ENCODE measurements at regions of chr2 and their contacts with region 1.

Region 1: DNA sequence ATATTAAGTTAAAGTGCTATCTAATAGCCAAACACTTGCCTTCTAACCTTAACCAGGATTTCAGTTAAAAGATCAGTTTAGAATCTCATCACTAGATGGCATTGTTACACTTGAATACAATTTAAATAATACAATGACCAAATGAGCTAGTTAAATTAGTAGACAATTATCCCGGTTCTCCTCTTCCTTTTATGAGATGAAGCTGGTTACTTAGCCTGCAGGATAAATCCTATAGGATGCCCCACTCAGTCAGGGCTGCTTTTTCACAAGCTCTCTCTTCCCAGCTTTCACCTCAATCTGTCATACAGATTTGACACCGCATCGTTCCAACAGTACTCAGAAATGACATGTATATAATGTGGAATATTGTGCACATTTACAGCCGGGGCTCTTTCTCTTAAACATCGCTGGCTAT is 678.8 kb downstream of the KCNJ3 start:
- DNase-seq: no peak
- H3K4me3 ChIP-seq: no peak overlapping the region
- H3K4me3 Mint-ChIP-seq: no peak overlapping the region
- H3K27ac Mint-ChIP-seq: no peak overlapping the region
- H3K4me1 ChIP-seq: no peaks in the 10 kb centered on the region
- H3K4me1 Mint-ChIP-seq: no peaks in the 10 kb centered on the region
- H3K27me3 ChIP-seq: no peaks in the 10 kb centered on the region
- H3K27me3 Mint-ChIP-seq: no peaks in the 10 kb centered on the region
- CTCF ChIP-seq: peak; percentile 6 to 27

Region 2: DNA sequence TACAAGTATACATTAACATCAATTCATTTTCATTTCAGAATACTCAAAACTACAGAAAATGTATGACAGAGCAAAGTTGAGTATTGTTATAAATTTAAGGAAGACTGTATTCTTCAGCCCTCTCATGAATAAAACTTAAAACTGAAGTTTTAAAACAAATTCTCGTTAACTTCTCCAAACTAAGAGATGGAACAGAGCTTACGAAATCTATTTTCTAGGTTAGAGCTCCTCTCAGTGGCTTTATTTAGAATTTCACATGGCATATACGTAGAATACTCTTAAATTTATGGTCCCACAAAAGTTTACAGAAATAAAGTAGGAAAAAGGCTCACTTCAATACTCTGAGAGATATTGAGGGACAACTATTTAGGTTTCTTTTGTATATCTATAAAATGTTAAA is 66.7 kb before region 1 on chr2:
- CTCF ChIA-PET with region 1: no interaction called
- POLR2A ChIA-PET with region 1: no interaction called
- intact Hi-C with region 1: no loop called
- DNase-seq: no peak
- H3K4me3 ChIP-seq: no peak overlapping the region
- H3K4me3 Mint-ChIP-seq: no peak overlapping the region
- H3K27ac Mint-ChIP-seq: no peak overlapping the region
- H3K4me1 ChIP-seq: no peaks in the 10 kb centered on the region
- H3K4me1 Mint-ChIP-seq: no peaks in the 10 kb centered on the region
- H3K27me3 ChIP-seq: no peaks in the 10 kb centered on the region
- H3K27me3 Mint-ChIP-seq: no peaks in the 10 kb centered on the region
- CTCF ChIP-seq: peak; percentile 44 to 66

Region 3: GRCh38 chr2:155714983-155715382 is 337.7 kb after region 1 on chr2:
- CTCF ChIA-PET with region 1: no interaction called
- POLR2A ChIA-PET with region 1: no interaction called
- intact Hi-C with region 1: no loop called
- DNase-seq: no peak
- H3K4me3 ChIP-seq: no peak overlapping the region
- H3K4me3 Mint-ChIP-seq: no peak overlapping the region
- H3K27ac Mint-ChIP-seq: no peak overlapping the region
- H3K4me1 ChIP-seq: no peaks in the 10 kb centered on the region
- H3K4me1 Mint-ChIP-seq: no peaks in the 10 kb centered on the region
- H3K27me3 ChIP-seq: no peaks in the 10 kb centered on the region
- H3K27me3 Mint-ChIP-seq: no peaks in the 10 kb centered on the region
- CTCF ChIP-seq: no peak

Region 4: GRCh38 chr2:155815886-155816285 is 438.6 kb after region 1 on chr2:
- CTCF ChIA-PET with region 1: interaction called, 12 read pairs
- POLR2A ChIA-PET with region 1: no interaction called
- intact Hi-C with region 1: loop called (anchors 1 kb)
- DNase-seq: peak; percentile 58 to 64
- H3K4me3 ChIP-seq: no peak overlapping the region
- H3K4me3 Mint-ChIP-seq: no peak overlapping the region
- H3K27ac Mint-ChIP-seq: no peak overlapping the region
- H3K4me1 ChIP-seq: 0 out of 2 replicates have a peak, but pooled peaks cover 3% of the 10 kb centered on the region
- H3K4me1 Mint-ChIP-seq: no peaks in the 10 kb centered on the region
- H3K27me3 ChIP-seq: no peaks in the 10 kb centered on the region
- H3K27me3 Mint-ChIP-seq: no peaks in the 10 kb centered on the region
- CTCF ChIP-seq: peak; percentile 46

Region 5: GRCh38 chr2:156279446-156280150 is 902.3 kb after region 1 on chr2:
- CTCF ChIA-PET with region 1: no interaction called
- POLR2A ChIA-PET with region 1: no interaction called
- intact Hi-C with region 1: no loop called
- DNase-seq: no peak
- H3K4me3 ChIP-seq: no peak overlapping the region
- H3K4me3 Mint-ChIP-seq: no peak overlapping the region
- H3K27ac Mint-ChIP-seq: no peak overlapping the region
- H3K4me1 ChIP-seq: no peaks in the 10 kb centered on the region
- H3K4me1 Mint-ChIP-seq: no peaks in the 10 kb centered on the region
- H3K27me3 ChIP-seq: no peaks in the 10 kb centered on the region
- H3K27me3 Mint-ChIP-seq: peaks cover 3% of the 10 kb centered on the region
- CTCF ChIP-seq: no peak

Region 6: GRCh38 chr2:156672556-156673332 is 1295.5 kb after region 1 on chr2:
- CTCF ChIA-PET with region 1: no interaction called
- POLR2A ChIA-PET with region 1: no interaction called
- intact Hi-C with region 1: loop called (anchors 10 kb)
- DNase-seq: no peak
- H3K4me3 ChIP-seq: no peak overlapping the region
- H3K4me3 Mint-ChIP-seq: no peak overlapping the region
- H3K27ac Mint-ChIP-seq: no peak overlapping the region
- H3K4me1 ChIP-seq: no peaks in the 10 kb centered on the region
- H3K4me1 Mint-ChIP-seq: no peaks in the 10 kb centered on the region
- H3K27me3 ChIP-seq: no peaks in the 10 kb centered on the region
- H3K27me3 Mint-ChIP-seq: no peaks in the 10 kb centered on the region
- CTCF ChIP-seq: no peak

Measured in Caco-2 (cell line).